H1 (cell line): ENCODE measurements at regions of chr1 and their contacts with region 1.

Region 1: DNA sequence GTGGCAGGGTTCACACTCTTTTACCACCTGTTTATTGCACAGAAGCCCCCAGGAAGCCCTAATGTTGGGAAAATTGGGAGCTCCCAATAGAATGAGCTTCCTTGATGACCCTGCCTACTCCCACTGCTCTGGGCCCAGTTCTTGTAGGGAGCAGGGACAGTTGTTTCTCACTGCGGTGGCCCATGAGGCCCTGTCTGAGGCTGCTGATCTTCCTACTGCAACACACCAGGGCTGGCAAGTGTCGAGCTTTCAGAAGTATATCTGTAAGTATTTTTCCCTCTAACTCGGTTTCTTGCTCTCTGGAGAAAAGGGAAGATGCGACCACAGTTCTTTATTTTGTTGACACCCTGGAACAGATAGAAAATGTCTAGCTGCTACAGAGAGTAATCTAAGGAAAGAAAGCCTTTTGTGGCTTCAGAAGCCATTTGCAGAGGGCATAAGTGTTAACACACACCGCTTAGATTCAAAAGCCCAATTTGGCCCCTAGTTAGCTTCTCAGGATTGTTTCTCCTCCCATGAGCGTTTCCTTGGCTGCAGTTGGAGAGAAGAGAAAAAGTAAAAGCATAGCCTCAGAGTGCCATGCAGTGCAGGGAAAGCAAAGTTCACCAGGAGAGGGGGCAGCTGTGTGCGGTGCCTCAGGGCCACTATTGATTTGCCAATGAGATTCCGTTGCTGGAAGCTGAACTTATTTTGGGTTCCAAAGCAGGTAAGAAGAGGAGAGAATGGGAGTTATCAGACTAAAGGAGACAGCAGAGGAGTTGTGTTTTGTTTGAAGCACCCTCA is 102.6 kb downstream of the SELENOF start:
- DNase-seq: peak; percentile 33 to 52
- H3K4me3 ChIP-seq: no peak overlapping the region
- H3K27ac ChIP-seq: no peak overlapping the region
- H3K4me1 ChIP-seq: peaks cover 0 to 3% (median 1%) of the 10 kb centered on the region in 4 experiments; a peak in 3 of 7 replicates
- H3K27me3 ChIP-seq: no peaks in the 10 kb centered on the region
- CTCF ChIP-seq: peak; percentile 59 to 73 (median 67)
- EP300 ChIP-seq: no peak
- POLR2A ChIP-seq: no peak
- RAD21 ChIP-seq: peak; percentile 57 to 67

Region 2: GRCh38 chr1:86774305-86775295 is 36.7 kb before region 1 on chr1:
- CTCF ChIA-PET with region 1: no interaction called
- POLR2A ChIA-PET with region 1: no interaction called
- DNase-seq: peak in 1 of 2 experiments; percentile 31
- H3K4me3 ChIP-seq: no peak overlapping the region
- H3K27ac ChIP-seq: no peak overlapping the region
- H3K4me1 ChIP-seq: peaks cover 0 to 5% (median 1%) of the 10 kb centered on the region in 4 experiments; a peak in 3 of 7 replicates
- H3K27me3 ChIP-seq: no peaks in the 10 kb centered on the region
- CTCF ChIP-seq: no peak
- EP300 ChIP-seq: no peak
- POLR2A ChIP-seq: no peak
- RAD21 ChIP-seq: no peak

Region 3: DNA sequence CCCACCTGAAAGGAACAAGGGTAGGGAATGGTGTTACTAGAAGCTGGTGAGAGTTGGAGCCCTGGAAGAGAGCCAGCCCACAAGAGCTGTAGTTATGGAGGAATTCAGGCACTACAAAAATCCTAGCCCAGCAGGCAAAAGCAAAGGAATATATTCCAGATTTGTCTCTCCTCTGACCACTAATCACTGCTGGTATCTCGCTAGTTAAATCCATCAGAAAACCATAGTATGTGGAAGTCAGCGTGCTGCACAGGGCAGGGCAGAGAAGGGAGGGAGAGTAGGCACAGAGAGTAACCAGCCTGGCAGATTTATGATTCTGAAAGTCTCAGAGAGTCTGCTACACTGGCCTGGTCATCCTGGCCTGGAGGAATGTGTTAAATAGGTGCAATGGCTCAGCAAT is 14.0 kb after region 1 on chr1:
- CTCF ChIA-PET with region 1: interaction called, 21 read pairs
- POLR2A ChIA-PET with region 1: interaction called, 3 read pairs
- DNase-seq: no peak
- H3K4me3 ChIP-seq: no peak overlapping the region
- H3K27ac ChIP-seq: no peak overlapping the region
- H3K4me1 ChIP-seq: no peaks in the 10 kb centered on the region; a peak in 1 of 7 replicates
- H3K27me3 ChIP-seq: no peaks in the 10 kb centered on the region
- CTCF ChIP-seq: no peak
- EP300 ChIP-seq: no peak
- POLR2A ChIP-seq: no peak
- RAD21 ChIP-seq: no peak